ENCODE measurements at regions of chr3 and their contacts with region 1.

Region 1: GRCh38 chr3:124014366-124014942 is 22.5 kb upstream of the ROPN1 start:
- DNase-seq: no peak
- ATAC-seq: no peak
- H3K4me3 ChIP-seq: no peak overlapping the region
- H3K27ac ChIP-seq: no peak overlapping the region
- H3K4me1 ChIP-seq: no peaks in the 10 kb centered on the region
- H3K27me3 ChIP-seq: no peaks in the 10 kb centered on the region
- CTCF ChIP-seq: no peak

Region 2: DNA sequence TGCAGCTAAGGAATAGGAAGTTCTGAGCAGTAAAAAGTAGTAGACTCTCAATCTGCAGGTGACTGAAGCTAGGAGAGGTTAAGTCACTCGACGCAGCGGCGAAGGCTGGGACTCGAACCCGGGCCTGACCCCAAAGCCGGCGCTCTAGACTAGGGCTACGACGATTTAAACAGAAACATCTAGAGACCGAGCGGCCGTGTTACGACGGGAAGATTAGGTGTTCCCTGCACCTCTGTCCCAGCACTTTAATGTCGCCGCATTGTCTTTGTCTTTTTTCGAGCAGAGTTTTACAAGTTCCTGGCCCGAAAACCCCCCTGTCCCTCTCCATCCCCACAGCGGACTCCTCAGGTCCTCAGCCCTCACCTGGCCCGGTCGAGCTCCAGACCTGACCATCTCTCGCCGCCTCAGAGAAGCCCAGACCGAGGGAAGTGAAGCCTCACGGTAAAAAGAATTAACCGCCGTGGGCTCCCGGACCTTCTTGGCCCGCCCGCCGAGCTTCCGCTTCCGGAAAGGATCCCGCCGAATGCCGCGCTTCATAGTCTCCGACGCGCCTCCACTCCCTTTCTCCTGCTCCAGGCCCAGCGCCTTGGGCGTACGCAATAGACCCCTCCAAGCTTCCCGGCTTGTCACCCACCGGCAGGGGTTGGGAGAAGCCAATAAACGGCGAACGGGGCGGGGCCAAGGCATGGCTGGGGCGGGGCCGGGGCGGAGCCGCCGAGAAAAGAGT is 53.5 kb before region 1 on chr3 and contains the start of gene CCDC14:
- intact Hi-C with region 1: no loop called
- DNase-seq: peak; percentile 93 to 95
- ATAC-seq: peak; percentile 98 to 100 (median 100)
- H3K4me3 ChIP-seq: peak within 1 kb of the TSS; percentile 75
- H3K27ac ChIP-seq: peak within 1 kb of the TSS; percentile 66
- H3K4me1 ChIP-seq: peaks cover 4% of the 10 kb centered on the region
- H3K27me3 ChIP-seq: no peaks in the 10 kb centered on the region
- CTCF ChIP-seq: no peak
- total RNA-seq, gene CCDC14: 3.5 to 7.3 (median 5.9) TPM

Region 3: GRCh38 chr3:124078953-124079911 is 64.8 kb after region 1 on chr3:
- intact Hi-C with region 1: loop called (anchors 1 to 5 kb)
- DNase-seq: no peak
- ATAC-seq: peak; percentile 50 to 75 (median 62)
- H3K4me3 ChIP-seq: no peak overlapping the region
- H3K27ac ChIP-seq: peak overlapping the region; percentile 26
- H3K4me1 ChIP-seq: peaks cover 10% of the 10 kb centered on the region
- H3K27me3 ChIP-seq: no peaks in the 10 kb centered on the region
- CTCF ChIP-seq: peak; percentile 73

Region 4: DNA sequence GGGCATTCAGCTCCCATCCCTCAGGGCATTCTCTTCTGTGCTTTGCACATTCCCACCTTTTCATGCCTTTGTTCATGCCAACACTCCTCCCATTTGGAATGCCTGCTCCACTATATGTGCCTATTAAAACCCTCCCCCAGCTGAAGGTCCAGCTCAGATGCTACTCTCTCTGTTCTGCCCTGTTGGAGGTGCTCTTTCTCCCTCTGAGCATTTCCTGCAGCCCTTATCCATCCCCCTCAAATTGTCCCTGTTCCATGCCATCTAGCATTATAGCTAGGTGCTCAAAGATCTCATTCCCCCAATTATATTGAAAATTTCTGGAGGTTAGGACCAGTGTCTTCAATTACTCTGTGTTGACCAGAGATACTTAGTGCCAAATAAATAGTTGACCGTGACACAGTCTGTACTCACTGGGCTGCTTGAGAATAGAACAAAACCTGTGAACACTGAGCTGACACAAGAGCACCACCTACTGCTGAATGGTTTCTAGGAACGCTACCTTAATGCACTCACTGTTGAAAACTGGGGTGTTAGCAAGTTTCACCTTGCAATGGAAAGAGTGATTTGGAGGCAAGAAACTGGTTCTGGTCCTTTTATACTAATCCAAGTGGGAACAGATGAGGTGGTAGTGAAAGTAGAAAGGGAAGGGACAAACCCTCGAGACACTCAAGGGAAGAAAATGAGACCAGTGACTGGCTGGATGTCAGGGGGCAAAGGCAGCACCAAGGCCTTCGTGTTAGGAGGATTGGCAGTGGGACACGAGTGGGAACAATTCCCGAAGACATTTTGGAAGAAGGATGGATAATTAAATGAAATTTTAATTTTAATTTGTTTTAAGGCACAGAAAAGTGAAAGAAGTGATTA is 267.2 kb after region 1 on chr3:
- intact Hi-C with region 1: loop called (anchors 2 to 5 kb)
- DNase-seq: no peak
- ATAC-seq: peak; percentile 63 to 84 (median 75)
- H3K4me3 ChIP-seq: no peak overlapping the region
- H3K27ac ChIP-seq: no peak overlapping the region
- H3K4me1 ChIP-seq: peaks cover 7% of the 10 kb centered on the region
- H3K27me3 ChIP-seq: no peaks in the 10 kb centered on the region
- CTCF ChIP-seq: peak; percentile 54